Ovary (tissue), 10 donors: ENCODE measurements at regions of chr17 and their contacts with region 1.

Region 1: GRCh38 chr17:28763804-28764266 is 20.0 kb downstream of the TRAF4 start:
- DNase-seq: peak in 4 of 5 donors; percentile 60 to 88 (median 72)
- H3K4me3 ChIP-seq: no peak overlapping the region
- H3K27ac ChIP-seq: no peak overlapping the region
- H3K4me1 ChIP-seq: no peaks in the 10 kb centered on the region
- H3K27me3 ChIP-seq: no peaks in the 10 kb centered on the region
- CTCF ChIP-seq: peak; percentile 78 to 90 (median 84)
- EP300 ChIP-seq: no peak
- POLR2A ChIP-seq: no peak

Region 2: GRCh38 chr17:27353461-27354050 is 1410.3 kb before region 1 on chr17:
- intact Hi-C with region 1: no loop called
- DNase-seq: peak; percentile 91 to 95 (median 94)
- H3K4me3 ChIP-seq: peak overlapping the region; percentile 59
- H3K27ac ChIP-seq: peak overlapping the region; percentile 80 to 94
- H3K4me1 ChIP-seq: no peaks in the 10 kb centered on the region
- H3K27me3 ChIP-seq: no peaks in the 10 kb centered on the region
- CTCF ChIP-seq: peak; percentile 88 to 99 (median 99)
- EP300 ChIP-seq: peak; percentile 7
- POLR2A ChIP-seq: peak; percentile 94

Region 3: GRCh38 chr17:28071891-28072606 is 691.8 kb before region 1 on chr17:
- intact Hi-C with region 1: no loop called
- DNase-seq: no peak
- H3K4me3 ChIP-seq: no peak overlapping the region
- H3K27ac ChIP-seq: no peak overlapping the region
- H3K4me1 ChIP-seq: no peaks in the 10 kb centered on the region
- H3K27me3 ChIP-seq: no peaks in the 10 kb centered on the region
- CTCF ChIP-seq: no peak
- EP300 ChIP-seq: no peak
- POLR2A ChIP-seq: no peak

Region 4: DNA sequence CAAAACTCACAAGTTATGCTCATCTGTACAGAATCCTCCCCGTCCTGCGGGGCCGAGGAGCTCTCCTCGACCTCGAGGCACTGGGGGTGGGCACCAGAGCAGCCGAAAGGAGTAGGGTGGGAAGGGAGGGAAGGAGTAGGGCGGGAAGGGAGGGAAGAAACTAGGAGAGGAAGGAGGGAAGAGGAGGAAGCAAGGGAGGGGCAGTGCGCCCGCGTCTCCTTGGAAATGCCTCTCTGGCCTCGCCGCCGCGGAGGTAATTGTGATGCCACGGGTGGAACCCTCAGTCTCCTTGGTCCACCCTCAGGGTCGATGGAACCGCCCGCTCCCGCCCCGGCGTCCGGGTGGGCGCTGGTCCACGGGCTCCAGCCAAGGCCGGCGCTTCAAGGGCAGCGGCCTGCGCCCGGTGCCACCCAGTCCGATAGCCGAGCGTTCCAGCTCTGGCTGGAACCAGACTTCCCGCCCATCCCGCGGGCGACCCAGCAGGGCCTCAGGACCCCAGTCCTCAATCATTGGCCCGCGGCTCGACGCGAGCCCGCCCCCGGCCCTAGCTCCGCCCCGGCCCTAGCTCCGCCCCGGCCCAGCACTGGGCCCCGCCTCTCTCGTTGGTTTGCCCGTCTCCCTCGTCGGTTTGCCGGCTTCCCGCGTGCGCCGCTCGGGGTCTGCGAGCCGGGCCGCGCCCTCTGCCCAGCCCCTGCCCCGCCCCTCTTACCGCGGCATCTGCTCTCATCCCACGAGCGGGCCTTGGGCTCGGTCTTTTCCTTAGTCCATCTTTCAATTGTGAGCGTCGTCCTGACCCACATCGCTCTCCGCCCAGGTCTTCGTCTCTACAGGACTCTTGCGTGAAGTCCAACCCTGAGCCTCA is 52.7 kb before region 1 on chr17:
- intact Hi-C with region 1: no loop called
- DNase-seq: peak; percentile 89 to 95 (median 94)
- H3K4me3 ChIP-seq: peak overlapping the region; percentile 66
- H3K27ac ChIP-seq: peak overlapping the region; percentile 34 to 95
- H3K4me1 ChIP-seq: peaks cover 6% of the 10 kb centered on the region
- H3K27me3 ChIP-seq: no peaks in the 10 kb centered on the region
- CTCF ChIP-seq: no peak
- EP300 ChIP-seq: no peak
- POLR2A ChIP-seq: peak; percentile 88

Region 5: GRCh38 chr17:28854457-28855350 is 90.9 kb after region 1 on chr17 and contains the start of gene ERAL1:
- intact Hi-C with region 1: loop called in 1 of 4 experiments (anchors 10 kb)
- DNase-seq: peak; percentile 74 to 84 (median 80)
- H3K4me3 ChIP-seq: peak within 1 kb of the TSS; percentile 67
- H3K27ac ChIP-seq: peak within 1 kb of the TSS; percentile 40 to 73
- H3K4me1 ChIP-seq: peaks cover 1% of the 10 kb centered on the region
- H3K27me3 ChIP-seq: no peaks in the 10 kb centered on the region
- CTCF ChIP-seq: no peak
- EP300 ChIP-seq: no peak
- POLR2A ChIP-seq: peak; percentile 46
- total RNA-seq, gene ERAL1: 18.8 to 33.4 (median 28.9) TPM

Region 6: GRCh38 chr17:28916302-28916934 is 152.6 kb after region 1 on chr17:
- intact Hi-C with region 1: loop called in 2 of 4 experiments (anchors 10 kb)
- DNase-seq: peak in 2 of 5 donors; percentile 52 to 54
- H3K4me3 ChIP-seq: no peak overlapping the region
- H3K27ac ChIP-seq: no peak overlapping the region
- H3K4me1 ChIP-seq: no peaks in the 10 kb centered on the region
- H3K27me3 ChIP-seq: no peaks in the 10 kb centered on the region
- CTCF ChIP-seq: peak; percentile 16 to 48 (median 42)
- EP300 ChIP-seq: no peak
- POLR2A ChIP-seq: no peak

Region 7: GRCh38 chr17:28951991-28952975 is 188.4 kb after region 1 on chr17:
- intact Hi-C with region 1: no loop called
- DNase-seq: peak; percentile 94 to 98 (median 95)
- H3K4me3 ChIP-seq: peak overlapping the region; percentile 70
- H3K27ac ChIP-seq: peak overlapping the region; percentile 95
- H3K4me1 ChIP-seq: peaks cover 2% of the 10 kb centered on the region
- H3K27me3 ChIP-seq: no peaks in the 10 kb centered on the region
- CTCF ChIP-seq: no peak
- EP300 ChIP-seq: peak; percentile 24
- POLR2A ChIP-seq: no peak